MCF 10A (cell line): ENCODE measurements at regions of chr15 and their contacts with region 1.

Region 1: GRCh38 chr15:56496635-56497034 is 31.7 kb upstream of the MNS1 start:
- DNase-seq: peak; percentile 71
- H3K4me3 Mint-ChIP-seq: no peak overlapping the region
- H3K27ac Mint-ChIP-seq: no peak overlapping the region
- H3K4me1 Mint-ChIP-seq: peaks cover 5% of the 10 kb centered on the region
- H3K27me3 Mint-ChIP-seq: peaks cover 14% of the 10 kb centered on the region
- CTCF ChIP-seq: peak; percentile 64

Region 2: DNA sequence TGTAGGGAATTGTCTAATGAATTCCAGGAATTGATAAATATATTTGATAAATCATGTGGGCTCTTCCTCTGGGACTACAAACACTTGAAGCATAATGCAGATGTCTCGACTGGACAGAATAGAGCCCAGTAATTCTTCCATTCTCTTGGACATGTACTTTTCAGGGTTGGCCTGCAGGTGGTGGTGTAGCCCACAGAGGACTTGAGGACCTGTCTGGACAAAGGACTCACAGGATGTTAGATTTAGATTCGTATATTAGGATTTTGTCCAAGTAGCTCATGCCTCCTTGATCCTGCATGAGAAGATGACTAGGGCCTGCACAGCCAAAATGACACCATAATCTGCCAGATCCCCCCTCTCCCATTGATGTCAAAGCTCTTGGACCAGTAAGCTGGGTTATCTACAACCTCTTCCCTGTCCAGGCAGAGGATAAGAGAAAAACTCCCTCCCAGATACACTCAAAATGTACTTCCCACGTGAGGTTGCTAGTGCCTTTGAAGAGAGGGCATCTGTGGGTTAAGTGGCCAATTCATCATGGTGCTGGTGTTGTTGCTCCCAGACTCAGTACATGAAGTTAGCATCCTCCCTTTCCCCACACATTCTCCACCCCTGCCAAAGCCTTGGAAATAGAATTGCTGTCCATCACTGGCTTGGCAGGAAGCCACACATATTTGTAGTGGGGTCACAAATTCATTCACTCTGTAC is 325.2 kb after region 1 on chr15:
- CTCF ChIA-PET with region 1: interaction called, 5 read pairs
- POLR2A ChIA-PET with region 1: no interaction called
- intact Hi-C with region 1: loop called (anchors 2 kb)
- DNase-seq: peak; percentile 74
- H3K4me3 Mint-ChIP-seq: no peak overlapping the region
- H3K27ac Mint-ChIP-seq: no peak overlapping the region
- H3K4me1 Mint-ChIP-seq: peaks cover 14% of the 10 kb centered on the region
- H3K27me3 Mint-ChIP-seq: no peaks in the 10 kb centered on the region
- CTCF ChIP-seq: peak; percentile 72

Region 3: DNA sequence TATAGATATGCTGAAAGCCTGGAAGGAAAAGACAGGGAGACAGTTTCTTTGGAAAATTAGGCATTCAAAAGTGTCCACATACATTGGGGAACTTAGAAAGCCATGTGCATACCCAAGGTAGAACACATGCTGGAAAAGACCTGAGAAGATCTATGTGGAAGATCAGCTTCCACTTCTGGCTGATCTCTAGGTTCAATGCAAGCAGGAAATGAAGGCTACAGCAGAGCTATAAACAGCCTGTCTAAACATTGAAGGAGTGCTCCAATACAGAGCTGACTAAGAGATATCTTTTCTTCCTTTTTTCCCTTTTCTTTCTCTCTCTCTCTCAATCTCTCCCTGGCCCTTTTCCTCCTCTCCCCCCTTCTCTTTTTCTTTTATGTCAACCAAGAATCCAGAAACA is 348.3 kb after region 1 on chr15:
- CTCF ChIA-PET with region 1: no interaction called
- POLR2A ChIA-PET with region 1: no interaction called
- intact Hi-C with region 1: no loop called
- DNase-seq: no peak
- H3K4me3 Mint-ChIP-seq: no peak overlapping the region
- H3K27ac Mint-ChIP-seq: no peak overlapping the region
- H3K4me1 Mint-ChIP-seq: no peaks in the 10 kb centered on the region
- H3K27me3 Mint-ChIP-seq: no peaks in the 10 kb centered on the region
- CTCF ChIP-seq: no peak

Region 4: GRCh38 chr15:56886932-56887781 is 390.5 kb after region 1 on chr15:
- CTCF ChIA-PET with region 1: no interaction called
- POLR2A ChIA-PET with region 1: interaction called, 4 read pairs
- intact Hi-C with region 1: loop called (anchors 1 kb)
- DNase-seq: peak; percentile 93
- H3K4me3 Mint-ChIP-seq: peak overlapping the region; percentile 81
- H3K27ac Mint-ChIP-seq: peak overlapping the region; percentile 61
- H3K4me1 Mint-ChIP-seq: peaks cover 24% of the 10 kb centered on the region
- H3K27me3 Mint-ChIP-seq: no peaks in the 10 kb centered on the region
- CTCF ChIP-seq: no peak

Region 5: DNA sequence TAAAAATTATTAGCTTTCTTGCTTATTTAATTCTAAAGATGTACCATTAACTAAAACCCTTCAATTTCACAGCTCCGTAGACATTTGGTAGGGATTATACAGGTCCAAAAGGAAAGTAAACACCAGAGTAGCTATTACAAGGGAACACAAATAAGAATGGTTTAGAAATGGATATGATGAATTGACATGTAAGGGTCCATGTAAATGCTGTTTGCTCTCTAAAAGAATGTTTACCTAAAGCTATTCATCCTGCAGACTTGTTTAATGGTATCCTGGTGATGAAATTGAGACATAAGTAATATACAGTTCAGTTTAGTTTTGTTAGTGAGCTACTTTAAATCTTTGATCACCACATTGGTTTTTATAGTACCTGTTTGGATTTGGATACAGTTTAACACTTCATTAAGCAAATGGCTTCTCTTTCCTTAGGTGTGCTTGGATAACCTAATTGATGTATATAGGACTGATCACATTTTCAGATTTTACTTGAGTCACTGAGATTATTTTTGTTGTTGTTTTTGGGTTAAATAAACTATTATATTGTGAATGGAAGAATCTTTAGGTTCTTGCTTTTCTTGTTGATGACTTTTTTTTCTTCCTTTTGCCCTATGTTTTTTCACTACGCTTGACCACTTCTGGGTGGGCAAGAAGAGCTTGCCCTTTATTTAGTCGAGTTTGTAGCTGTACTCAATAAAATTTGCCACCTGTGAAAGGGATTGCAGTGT is 537.2 kb after region 1 on chr15:
- CTCF ChIA-PET with region 1: no interaction called
- POLR2A ChIA-PET with region 1: no interaction called
- intact Hi-C with region 1: no loop called
- DNase-seq: no peak
- H3K4me3 Mint-ChIP-seq: no peak overlapping the region
- H3K27ac Mint-ChIP-seq: no peak overlapping the region
- H3K4me1 Mint-ChIP-seq: no peaks in the 10 kb centered on the region
- H3K27me3 Mint-ChIP-seq: no peaks in the 10 kb centered on the region
- CTCF ChIP-seq: no peak

Region 6: GRCh38 chr15:57213862-57214261 is 717.2 kb after region 1 on chr15:
- CTCF ChIA-PET with region 1: interaction called, 8 read pairs
- POLR2A ChIA-PET with region 1: no interaction called
- intact Hi-C with region 1: loop called (anchors 1 kb)
- DNase-seq: peak; percentile 46
- H3K4me3 Mint-ChIP-seq: no peak overlapping the region
- H3K27ac Mint-ChIP-seq: no peak overlapping the region
- H3K4me1 Mint-ChIP-seq: peaks cover 11% of the 10 kb centered on the region
- H3K27me3 Mint-ChIP-seq: no peaks in the 10 kb centered on the region
- CTCF ChIP-seq: peak; percentile 37

Region 7: DNA sequence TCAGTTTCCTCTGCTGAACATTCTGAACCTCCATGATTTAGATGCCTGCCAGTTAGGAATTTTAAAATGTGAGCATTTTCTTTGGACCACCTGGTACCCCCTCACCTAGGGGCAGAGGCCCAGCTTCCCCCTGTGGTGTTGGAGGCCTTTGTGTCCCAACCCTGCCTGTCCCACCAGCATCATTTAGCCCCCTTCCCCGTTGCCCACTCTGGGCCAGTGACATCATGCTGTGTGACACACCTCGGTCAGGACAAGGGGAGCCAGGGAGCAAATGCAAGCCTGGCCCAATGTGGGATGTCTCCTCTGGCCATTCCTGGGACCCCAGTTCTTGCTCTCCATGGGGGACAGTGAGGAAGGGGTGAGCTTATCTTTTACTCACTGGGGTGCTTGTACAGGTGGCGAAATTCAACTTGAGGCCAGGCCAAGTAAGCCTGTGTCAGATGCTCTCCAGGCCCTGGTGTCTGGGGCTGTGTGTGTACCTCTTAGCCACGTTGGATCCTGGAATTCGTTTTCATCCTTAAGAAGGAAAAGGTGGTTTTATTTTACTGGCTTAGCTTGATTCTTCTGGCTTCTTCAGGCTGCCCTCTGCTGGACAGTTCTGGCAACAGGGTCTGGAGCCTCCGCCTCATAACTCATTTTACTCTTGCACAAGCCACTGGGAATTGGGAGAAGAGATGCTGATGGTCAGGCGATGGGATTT is 1045.3 kb after region 1 on chr15:
- CTCF ChIA-PET with region 1: interaction called, 3 read pairs
- POLR2A ChIA-PET with region 1: no interaction called
- intact Hi-C with region 1: loop called (anchors 5 kb)
- DNase-seq: peak; percentile 80
- H3K4me3 Mint-ChIP-seq: no peak overlapping the region
- H3K27ac Mint-ChIP-seq: no peak overlapping the region
- H3K4me1 Mint-ChIP-seq: no peaks in the 10 kb centered on the region
- H3K27me3 Mint-ChIP-seq: peaks cover 17% of the 10 kb centered on the region
- CTCF ChIP-seq: peak; percentile 78